Aorta (tissue), 5 donors: ENCODE measurements at regions of chr12 and their contacts with region 1.

Region 1: DNA sequence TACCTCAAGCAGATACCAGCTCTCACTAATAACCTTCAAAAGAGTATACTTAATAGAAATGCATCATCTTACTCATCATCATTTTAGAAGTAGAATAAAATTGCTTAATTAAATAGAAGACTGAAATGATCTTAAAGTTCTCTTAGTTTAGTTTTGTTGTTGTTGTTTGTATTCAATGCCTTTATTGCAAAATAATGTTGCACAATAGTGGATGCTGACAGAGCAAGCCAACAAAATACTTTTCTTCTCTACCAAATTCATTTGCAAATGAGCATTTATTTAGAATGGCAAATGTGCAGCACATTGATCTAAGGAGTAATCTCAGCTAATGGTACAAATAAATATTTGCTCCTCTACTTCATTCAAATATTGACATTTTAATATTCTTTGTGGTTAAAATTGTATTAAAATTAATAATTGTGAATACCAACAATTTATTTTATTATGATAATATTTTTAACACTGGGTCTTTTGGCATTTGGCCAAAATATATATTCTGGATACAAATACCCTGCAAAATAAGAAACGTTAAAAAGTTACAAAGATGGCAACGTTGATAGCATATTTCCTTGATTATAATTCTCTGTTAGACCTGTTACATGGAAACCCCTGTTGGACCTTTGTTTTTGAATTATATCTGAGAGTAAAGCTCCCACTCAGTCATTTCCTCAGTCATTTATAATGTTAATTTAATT is 496.1 kb downstream of the RERGL start:
- DNase-seq: no peak
- ATAC-seq: no peak
- H3K4me3 ChIP-seq: no peak overlapping the region
- H3K27ac ChIP-seq: no peak overlapping the region
- H3K4me1 ChIP-seq: no peaks in the 10 kb centered on the region
- H3K27me3 ChIP-seq: peaks cover 0 to 1% of the 10 kb centered on the region in 2 donors

Region 2: GRCh38 chr12:17609153-17609552 is 15.3 kb after region 1 on chr12:
- intact Hi-C with region 1: loop called in 1 of 2 experiments (anchors 2 kb)
- DNase-seq: no peak
- ATAC-seq: no peak
- H3K4me3 ChIP-seq: no peak overlapping the region
- H3K27ac ChIP-seq: no peak overlapping the region
- H3K4me1 ChIP-seq: no peaks in the 10 kb centered on the region
- H3K27me3 ChIP-seq: peaks cover 0 to 1% of the 10 kb centered on the region in 2 donors